Common myeloid progenitor, CD34-positive (primary cell): ENCODE measurements at regions of chr19 and their contacts with region 1.

Region 1: GRCh38 chr19:19385108-19385899 is 20.2 kb upstream of the GATAD2A start:
- DNase-seq: peak; percentile 100
- H3K4me3 ChIP-seq: peak overlapping the region; percentile 79 to 95 (median 91)
- H3K27ac ChIP-seq: peak overlapping the region; percentile 95 to 97
- H3K4me1 ChIP-seq: peaks cover 0 to 41% (median 32%) of the 10 kb centered on the region in 4 experiments
- H3K27me3 ChIP-seq: no peaks in the 10 kb centered on the region

Region 2: GRCh38 chr19:19404879-19405860 is 19.9 kb after region 1 on chr19 and contains the start of gene GATAD2A:
- CTCF ChIA-PET with region 1: interaction called, 20 read pairs
- POLR2A ChIA-PET with region 1: interaction called, 10 read pairs
- DNase-seq: peak; percentile 88 to 92 (median 88)
- H3K4me3 ChIP-seq: peak within 1 kb of the TSS; percentile 61 to 85 (median 78)
- H3K27ac ChIP-seq: peak within 1 kb of the TSS; percentile 20 to 81
- H3K4me1 ChIP-seq: peaks cover 14 to 63% (median 35%) of the 10 kb centered on the region in 4 experiments
- H3K27me3 ChIP-seq: no peaks in the 10 kb centered on the region

Region 3: DNA sequence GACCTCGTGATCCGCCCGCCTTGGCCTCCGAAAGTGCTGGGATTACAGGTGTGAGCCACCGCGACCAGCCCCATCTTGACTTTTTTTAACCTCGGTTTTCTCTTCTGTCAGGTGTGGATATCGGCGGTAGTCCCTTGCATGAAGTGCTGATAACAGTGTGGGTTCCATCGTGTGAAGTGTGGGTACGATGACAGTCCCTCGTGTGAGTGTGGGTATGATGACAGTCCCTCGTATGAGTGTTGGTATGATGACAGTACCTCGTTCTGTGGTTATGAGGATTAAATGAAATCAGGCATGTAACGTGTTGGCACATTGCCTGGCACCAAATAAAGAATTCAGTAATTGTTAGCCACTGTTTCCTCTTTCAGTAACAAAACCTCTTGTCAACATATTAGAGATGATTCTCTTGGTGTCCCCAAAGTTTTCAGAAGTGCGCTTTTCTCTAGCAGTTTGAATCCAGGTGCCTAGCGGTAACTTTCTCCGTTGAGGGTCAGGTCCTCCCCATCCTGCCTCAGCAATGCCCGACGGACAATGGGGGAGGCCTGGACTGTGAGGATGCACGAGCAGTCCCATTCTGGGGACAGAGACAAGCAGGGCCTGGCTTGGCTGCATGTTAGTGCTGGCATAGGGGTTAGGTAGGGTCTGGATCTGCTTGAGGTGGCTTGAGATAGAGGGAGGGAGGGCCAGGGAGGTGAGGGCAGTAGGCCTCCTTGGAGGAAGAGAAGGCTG is 35.4 kb after region 1 on chr19:
- CTCF ChIA-PET with region 1: no interaction called
- POLR2A ChIA-PET with region 1: no interaction called
- DNase-seq: peak; percentile 16 to 76 (median 69)
- H3K4me3 ChIP-seq: no peak overlapping the region
- H3K27ac ChIP-seq: no peak overlapping the region
- H3K4me1 ChIP-seq: peaks cover 3 to 40% (median 28%) of the 10 kb centered on the region in 4 experiments
- H3K27me3 ChIP-seq: no peaks in the 10 kb centered on the region